PC-9 (cell line): ENCODE measurements at regions of chr4 and their contacts with region 1.

Region 1: DNA sequence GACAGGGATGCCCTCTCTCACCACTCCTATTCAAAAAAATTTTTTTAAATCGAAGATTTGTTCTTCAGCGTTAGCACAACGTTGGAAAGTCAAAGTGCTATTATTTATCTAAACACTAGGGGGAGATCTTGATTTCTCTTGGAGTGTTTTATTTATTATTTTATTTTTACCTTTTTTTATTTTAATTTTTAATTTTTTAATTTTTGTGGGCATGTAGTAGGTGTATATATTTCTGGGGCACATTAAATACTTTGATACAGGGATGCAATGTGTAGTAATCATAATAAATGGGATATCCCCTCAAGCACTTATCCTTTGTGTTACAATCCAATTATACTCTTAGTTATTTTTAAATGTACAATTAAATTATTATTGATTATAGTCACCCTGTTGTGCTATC is 37.4 kb upstream of the SLC10A4 start:
- DNase-seq: peak in 1 of 2 experiments; percentile 37
- H3K4me3 ChIP-seq: no peak overlapping the region
- H3K27ac ChIP-seq: no peak overlapping the region
- H3K4me1 ChIP-seq: no peaks in the 10 kb centered on the region
- H3K27me3 ChIP-seq: no peaks in the 10 kb centered on the region
- CTCF ChIP-seq: peak; percentile 66

Region 2: GRCh38 chr4:48269861-48270522 is 175.7 kb before region 1 on chr4:
- CTCF ChIA-PET with region 1: no interaction called
- POLR2A ChIA-PET with region 1: interaction called, 26 read pairs
- intact Hi-C with region 1: no loop called
- DNase-seq: peak; percentile 85 to 94
- H3K4me3 ChIP-seq: peak overlapping the region; percentile 58
- H3K27ac ChIP-seq: peak overlapping the region; percentile 97
- H3K4me1 ChIP-seq: peaks cover 23% of the 10 kb centered on the region
- H3K27me3 ChIP-seq: no peaks in the 10 kb centered on the region
- CTCF ChIP-seq: peak; percentile 39; the same call in 1 of the 2 replicates

Region 3: GRCh38 chr4:48431401-48431800 is 14.3 kb before region 1 on chr4:
- CTCF ChIA-PET with region 1: no interaction called
- POLR2A ChIA-PET with region 1: no interaction called
- intact Hi-C with region 1: no loop called
- DNase-seq: no peak
- H3K4me3 ChIP-seq: no peak overlapping the region
- H3K27ac ChIP-seq: no peak overlapping the region
- H3K4me1 ChIP-seq: no peaks in the 10 kb centered on the region
- H3K27me3 ChIP-seq: no peaks in the 10 kb centered on the region
- CTCF ChIP-seq: no peak

Region 4: GRCh38 chr4:48526406-48526805 is 80.7 kb after region 1 on chr4:
- CTCF ChIA-PET with region 1: interaction called, 11 read pairs
- POLR2A ChIA-PET with region 1: no interaction called
- intact Hi-C with region 1: no loop called
- DNase-seq: no peak
- H3K4me3 ChIP-seq: no peak overlapping the region
- H3K27ac ChIP-seq: no peak overlapping the region
- H3K4me1 ChIP-seq: no peaks in the 10 kb centered on the region
- H3K27me3 ChIP-seq: no peaks in the 10 kb centered on the region
- CTCF ChIP-seq: no peak

Region 5: DNA sequence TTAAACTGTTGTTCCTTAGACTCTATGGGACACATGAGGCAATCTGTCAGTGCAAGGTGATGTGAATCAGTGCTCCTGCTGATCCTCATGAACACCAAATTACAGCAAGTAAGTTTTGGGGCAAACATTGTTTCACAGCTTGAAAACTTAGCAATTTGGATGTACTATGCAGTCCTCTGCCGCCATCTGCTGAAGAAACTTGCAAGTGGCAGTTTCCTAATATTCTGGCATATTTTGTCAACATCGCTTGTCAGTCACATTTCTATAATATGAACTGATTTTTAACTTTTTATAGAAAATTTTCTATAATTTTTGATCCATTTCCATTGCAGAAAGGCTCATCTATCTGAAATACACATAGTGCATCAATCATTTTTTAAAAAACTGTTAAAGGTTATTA is 100.6 kb after region 1 on chr4:
- CTCF ChIA-PET with region 1: no interaction called
- POLR2A ChIA-PET with region 1: no interaction called
- intact Hi-C with region 1: loop called (anchors 10 kb)
- DNase-seq: peak in 1 of 2 experiments; percentile 15
- H3K4me3 ChIP-seq: no peak overlapping the region
- H3K27ac ChIP-seq: no peak overlapping the region
- H3K4me1 ChIP-seq: no peaks in the 10 kb centered on the region
- H3K27me3 ChIP-seq: no peaks in the 10 kb centered on the region
- CTCF ChIP-seq: peak; percentile 78